Cardiac septum (tissue), 1 donor: ENCODE measurements at regions of chr19 and their contacts with region 1.

Region 1: DNA sequence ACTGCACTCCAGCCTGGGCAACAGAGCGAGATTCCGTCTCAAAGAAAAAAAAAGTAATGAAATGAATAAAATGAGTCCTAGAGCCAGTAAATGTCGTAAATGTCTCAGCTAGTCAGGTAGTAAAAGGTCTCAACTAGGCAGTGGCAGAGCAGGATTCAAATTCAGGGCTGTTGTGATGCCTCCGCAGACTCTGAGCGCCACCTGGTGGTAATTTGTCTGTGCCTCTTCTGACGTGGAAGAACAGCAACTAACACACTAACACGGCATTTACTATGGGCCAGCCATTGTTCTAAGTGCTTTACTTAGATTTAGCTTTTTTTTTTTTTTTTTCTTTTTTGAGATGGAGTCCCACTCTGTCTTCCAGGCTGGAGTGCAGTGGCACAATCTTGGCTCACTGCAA is 30.2 kb downstream of the CYP2F1 start:
- DNase-seq: peak; percentile 81

Region 2: DNA sequence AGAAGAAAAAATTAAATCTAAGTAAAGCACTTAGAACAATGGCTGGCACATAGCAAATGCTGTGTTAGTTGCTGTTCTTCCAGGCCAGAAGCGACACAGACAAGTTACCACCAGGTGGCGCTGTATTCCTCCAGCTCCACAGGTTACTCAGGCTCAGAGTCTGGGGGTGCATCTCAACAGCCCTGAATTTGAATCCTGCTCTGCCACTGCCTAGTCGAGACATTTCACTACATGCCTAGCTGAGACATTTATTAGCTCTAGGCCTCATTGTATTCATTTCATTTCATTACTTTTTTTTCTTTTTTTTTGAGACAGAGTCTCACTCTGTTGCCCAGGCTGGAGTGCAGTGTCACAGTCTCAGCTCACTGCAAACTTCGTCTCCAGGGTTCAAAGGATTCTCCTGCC is 169.8 kb before region 1 on chr19:
- intact Hi-C with region 1: loop called (anchors 2 kb)
- DNase-seq: peak; percentile 83

Region 3: GRCh38 chr19:41076286-41076685 is 68.1 kb before region 1 on chr19:
- intact Hi-C with region 1: no loop called
- DNase-seq: no peak

Region 4: GRCh38 chr19:41133260-41133659 is 11.1 kb before region 1 on chr19:
- intact Hi-C with region 1: no loop called
- DNase-seq: no peak

Region 5: DNA sequence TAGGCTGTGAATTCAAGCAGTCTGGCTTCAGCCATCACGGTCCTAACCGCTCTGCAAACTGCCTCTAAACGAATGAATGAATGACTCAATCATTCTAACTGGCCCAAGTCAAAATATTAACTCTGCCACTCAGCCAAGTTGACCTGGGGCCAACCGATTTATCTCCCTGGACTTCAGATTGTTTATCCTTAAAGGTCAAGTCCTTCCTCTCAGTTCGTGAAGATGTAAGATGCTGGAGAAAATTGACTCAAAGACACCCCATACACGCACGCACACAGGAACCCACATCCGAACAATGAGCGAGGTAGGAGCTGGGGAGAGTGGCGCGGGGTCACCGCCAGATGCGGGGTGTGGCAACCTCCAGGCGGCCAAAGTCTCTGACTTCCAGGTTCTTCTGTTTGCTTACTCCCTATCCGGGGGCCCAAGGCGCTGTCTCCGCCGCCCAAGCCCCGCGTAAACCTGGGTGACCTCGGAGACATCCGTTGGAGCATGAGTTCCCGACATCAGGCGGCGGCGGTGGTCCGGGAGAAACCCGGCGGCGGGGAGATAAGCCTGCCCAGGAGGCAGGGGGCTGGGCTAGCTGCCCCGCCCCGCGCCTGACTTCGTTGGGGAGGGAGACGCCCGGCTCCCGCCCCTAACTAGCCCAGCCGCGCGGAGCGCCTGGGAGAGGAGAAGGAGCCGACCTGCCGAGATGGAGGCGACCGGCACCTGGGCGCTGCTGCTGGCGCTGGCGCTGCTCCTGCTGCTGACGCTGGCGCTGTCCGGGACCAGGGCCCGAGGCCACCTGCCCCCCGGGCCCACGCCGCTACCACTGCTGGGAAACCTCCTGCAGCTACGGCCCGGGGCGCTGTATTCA is 48.4 kb after region 1 on chr19 and contains the start of gene CYP2S1:
- intact Hi-C with region 1: no loop called
- DNase-seq: no peak
- total RNA-seq, gene CYP2S1: 0.48 TPM